ENCODE measurements at regions of chr1 and their contacts with region 1.

Region 1: GRCh38 chr1:179954493-179955297 is at the start of gene CEP350:
- DNase-seq: peak; percentile 99
- H3K4me3 Mint-ChIP-seq: peak within 1 kb of the TSS; percentile 73
- H3K27ac Mint-ChIP-seq: peak within 1 kb of the TSS; percentile 71
- H3K4me1 Mint-ChIP-seq: peaks cover 8% of the 10 kb centered on the region
- H3K27me3 Mint-ChIP-seq: no peaks in the 10 kb centered on the region
- CTCF ChIP-seq: no peak
- total RNA-seq, gene CEP350: 37.8 and 42.3 TPM in 2 replicates

Region 2: GRCh38 chr1:179706339-179706941 is 248.3 kb before region 1 on chr1:
- CTCF ChIA-PET with region 1: no interaction called
- intact Hi-C with region 1: loop called (anchors 10 kb)
- DNase-seq: peak; percentile 77
- H3K4me3 Mint-ChIP-seq: no peak overlapping the region
- H3K27ac Mint-ChIP-seq: no peak overlapping the region
- H3K4me1 Mint-ChIP-seq: peaks cover 9% of the 10 kb centered on the region
- H3K27me3 Mint-ChIP-seq: peaks cover 57% of the 10 kb centered on the region
- CTCF ChIP-seq: peak; percentile 82

Region 3: DNA sequence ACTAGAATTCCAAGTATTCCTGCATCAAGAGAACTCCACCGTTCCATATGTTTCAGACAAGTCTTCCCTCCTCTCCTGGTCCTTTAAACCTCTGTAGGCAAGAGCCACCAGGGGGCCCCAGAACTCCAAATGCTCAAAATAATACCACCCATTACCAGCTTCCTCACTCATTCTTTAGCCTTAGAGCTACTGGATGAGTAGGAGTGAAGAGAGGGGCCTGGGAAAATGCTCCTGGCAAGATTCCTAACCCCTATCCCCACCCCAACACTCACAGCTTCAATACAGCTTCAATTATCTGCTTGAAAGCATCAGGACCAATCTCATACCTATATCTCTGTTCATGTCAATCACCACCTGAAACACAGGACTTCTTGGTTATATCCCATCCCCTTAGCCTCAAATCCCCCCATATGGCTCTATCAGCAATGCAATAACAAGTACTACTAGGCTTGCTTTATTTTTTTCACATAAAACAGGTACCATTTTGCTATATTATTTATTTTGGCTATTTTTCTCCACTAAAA is 86.8 kb before region 1 on chr1:
- CTCF ChIA-PET with region 1: no interaction called
- intact Hi-C with region 1: loop called (anchors 2 kb)
- DNase-seq: peak; percentile 68
- H3K4me3 Mint-ChIP-seq: no peak overlapping the region
- H3K27ac Mint-ChIP-seq: no peak overlapping the region
- H3K4me1 Mint-ChIP-seq: peaks cover 10% of the 10 kb centered on the region
- H3K27me3 Mint-ChIP-seq: no peaks in the 10 kb centered on the region
- CTCF ChIP-seq: peak; percentile 80

Region 4: GRCh38 chr1:179882243-179883039 is 72.3 kb before region 1 on chr1 and contains the start of gene TOR1AIP1:
- CTCF ChIA-PET with region 1: no interaction called
- intact Hi-C with region 1: loop called (anchors 2 kb)
- DNase-seq: peak; percentile 98
- H3K4me3 Mint-ChIP-seq: peak within 1 kb of the TSS; percentile 96
- H3K27ac Mint-ChIP-seq: peak within 1 kb of the TSS; percentile 99
- H3K4me1 Mint-ChIP-seq: peaks cover 36% of the 10 kb centered on the region
- H3K27me3 Mint-ChIP-seq: no peaks in the 10 kb centered on the region
- CTCF ChIP-seq: peak; percentile 30
- total RNA-seq, gene TOR1AIP1: 40.1 and 46.7 TPM in 2 replicates

Region 5: GRCh38 chr1:179930879-179931278 is 23.8 kb before region 1 on chr1:
- CTCF ChIA-PET with region 1: no interaction called
- intact Hi-C with region 1: loop called (anchors 2 kb)
- DNase-seq: no peak
- H3K4me3 Mint-ChIP-seq: no peak overlapping the region
- H3K27ac Mint-ChIP-seq: no peak overlapping the region
- H3K4me1 Mint-ChIP-seq: peaks cover 18% of the 10 kb centered on the region
- H3K27me3 Mint-ChIP-seq: no peaks in the 10 kb centered on the region
- CTCF ChIP-seq: no peak

Region 6: GRCh38 chr1:179996099-179996498 is 41.4 kb after region 1 on chr1:
- CTCF ChIA-PET with region 1: no interaction called
- intact Hi-C with region 1: no loop called
- DNase-seq: no peak
- H3K4me3 Mint-ChIP-seq: no peak overlapping the region
- H3K27ac Mint-ChIP-seq: no peak overlapping the region
- H3K4me1 Mint-ChIP-seq: no peaks in the 10 kb centered on the region
- H3K27me3 Mint-ChIP-seq: no peaks in the 10 kb centered on the region
- CTCF ChIP-seq: no peak

Region 7: GRCh38 chr1:180040034-180040433 is 85.3 kb after region 1 on chr1:
- CTCF ChIA-PET with region 1: no interaction called
- intact Hi-C with region 1: no loop called
- DNase-seq: no peak
- H3K4me3 Mint-ChIP-seq: no peak overlapping the region
- H3K27ac Mint-ChIP-seq: no peak overlapping the region
- H3K4me1 Mint-ChIP-seq: no peaks in the 10 kb centered on the region
- H3K27me3 Mint-ChIP-seq: no peaks in the 10 kb centered on the region
- CTCF ChIP-seq: no peak

Region 8: GRCh38 chr1:180168786-180169639 is 214.3 kb after region 1 on chr1:
- CTCF ChIA-PET with region 1: no interaction called
- intact Hi-C with region 1: loop called (anchors 10 kb)
- DNase-seq: peak; percentile 80
- H3K4me3 Mint-ChIP-seq: peak overlapping the region; percentile 45
- H3K27ac Mint-ChIP-seq: peak overlapping the region; percentile 66
- H3K4me1 Mint-ChIP-seq: peaks cover 82% of the 10 kb centered on the region
- H3K27me3 Mint-ChIP-seq: no peaks in the 10 kb centered on the region
- CTCF ChIP-seq: peak; percentile 59